ENCODE measurements at regions of chr7 and their contacts with region 1.

Region 1: DNA sequence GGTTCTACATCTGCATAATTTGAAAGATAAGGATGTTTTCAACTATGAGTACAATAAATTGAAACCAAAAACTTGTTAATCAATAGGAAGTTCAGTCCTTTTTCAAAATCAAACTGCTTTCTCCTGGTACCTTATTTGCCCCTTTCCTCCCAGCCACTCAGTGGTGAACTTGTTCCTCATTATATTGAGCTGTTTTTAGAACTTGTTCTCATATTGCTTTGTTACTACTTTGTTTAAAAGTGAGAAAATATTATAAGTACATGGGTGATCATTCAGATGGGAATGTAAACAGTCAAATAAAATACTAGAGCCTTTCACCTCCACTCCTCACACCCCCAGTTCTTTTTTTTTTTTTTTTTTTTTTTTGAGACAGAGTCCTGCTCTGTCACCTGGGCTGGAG is 17.2 kb downstream of the UBE3C start:
- DNase-seq: no peak
- ATAC-seq: peak; percentile 53; the same call in 1 of the 2 replicates
- H3K4me3 ChIP-seq: no peak overlapping the region
- H3K27ac ChIP-seq: no peak overlapping the region
- H3K4me1 ChIP-seq: peaks cover 3% of the 10 kb centered on the region
- H3K27me3 ChIP-seq: no peaks in the 10 kb centered on the region
- CTCF ChIP-seq: no peak
- POLR2A ChIP-seq: no peak
- RAD21 ChIP-seq: no peak

Region 2: DNA sequence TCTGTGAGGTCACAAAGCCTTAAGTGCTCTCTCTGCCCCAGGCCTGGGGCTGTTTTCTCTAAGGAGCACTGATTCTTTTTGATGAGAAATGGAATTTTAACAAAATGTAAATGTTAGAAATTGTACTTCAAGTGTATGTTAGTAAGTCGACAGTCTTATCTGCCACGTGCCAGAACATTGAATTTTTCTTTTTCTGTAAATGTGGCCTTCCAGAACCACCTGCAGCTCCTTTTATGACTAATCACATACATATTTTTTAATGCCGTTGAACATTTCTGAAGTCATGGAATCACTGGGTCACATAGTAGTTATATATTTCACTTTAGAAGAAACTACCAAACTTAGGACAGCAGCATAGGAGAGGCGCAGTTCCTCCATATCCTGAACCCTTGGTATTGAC is 20.8 kb after region 1 on chr7:
- CTCF ChIA-PET with region 1: no interaction called
- POLR2A ChIA-PET with region 1: no interaction called
- dilution Hi-C with region 1: no loop called
- in situ Hi-C with region 1: no loop called
- intact Hi-C with region 1: loop called (anchors 2 kb)
- DNase-seq: no peak
- ATAC-seq: no peak
- H3K4me3 ChIP-seq: no peak overlapping the region
- H3K27ac ChIP-seq: no peak overlapping the region
- H3K4me1 ChIP-seq: no peaks in the 10 kb centered on the region
- H3K27me3 ChIP-seq: no peaks in the 10 kb centered on the region
- CTCF ChIP-seq: no peak
- POLR2A ChIP-seq: no peak
- RAD21 ChIP-seq: no peak

Region 3: DNA sequence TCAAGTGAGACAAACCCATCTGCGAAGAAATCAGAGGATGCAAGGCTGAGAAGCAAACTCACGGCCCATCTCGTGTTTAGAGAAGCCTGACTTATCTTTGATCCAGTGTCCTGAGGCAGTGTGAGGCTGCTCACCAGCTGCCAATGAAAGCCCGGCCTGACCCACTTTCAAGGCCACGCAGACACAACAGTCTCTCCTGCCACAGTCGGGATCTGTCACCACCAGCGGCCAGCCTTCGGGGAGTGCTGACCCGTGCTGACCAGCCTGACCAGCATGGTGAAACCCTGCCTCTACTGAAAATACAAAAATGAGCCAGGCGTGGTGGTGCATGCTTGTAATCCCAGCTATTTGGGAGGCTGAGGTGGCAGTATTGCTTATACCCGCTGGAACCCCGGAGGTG is 173.5 kb after region 1 on chr7:
- CTCF ChIA-PET with region 1: no interaction called
- POLR2A ChIA-PET with region 1: no interaction called
- dilution Hi-C with region 1: no loop called
- in situ Hi-C with region 1: no loop called
- intact Hi-C with region 1: no loop called
- DNase-seq: no peak
- ATAC-seq: peak; percentile 66
- H3K4me3 ChIP-seq: no peak overlapping the region
- H3K27ac ChIP-seq: no peak overlapping the region
- H3K4me1 ChIP-seq: no peaks in the 10 kb centered on the region
- H3K27me3 ChIP-seq: no peaks in the 10 kb centered on the region
- CTCF ChIP-seq: no peak
- POLR2A ChIP-seq: no peak
- RAD21 ChIP-seq: no peak